Activated CD4-positive, alpha-beta memory T cell treated with anti-CD3 and anti-CD28 coated beads for 36 hours (primary cell): ENCODE measurements at regions of chr21 and their contacts with region 1.

Region 1: DNA sequence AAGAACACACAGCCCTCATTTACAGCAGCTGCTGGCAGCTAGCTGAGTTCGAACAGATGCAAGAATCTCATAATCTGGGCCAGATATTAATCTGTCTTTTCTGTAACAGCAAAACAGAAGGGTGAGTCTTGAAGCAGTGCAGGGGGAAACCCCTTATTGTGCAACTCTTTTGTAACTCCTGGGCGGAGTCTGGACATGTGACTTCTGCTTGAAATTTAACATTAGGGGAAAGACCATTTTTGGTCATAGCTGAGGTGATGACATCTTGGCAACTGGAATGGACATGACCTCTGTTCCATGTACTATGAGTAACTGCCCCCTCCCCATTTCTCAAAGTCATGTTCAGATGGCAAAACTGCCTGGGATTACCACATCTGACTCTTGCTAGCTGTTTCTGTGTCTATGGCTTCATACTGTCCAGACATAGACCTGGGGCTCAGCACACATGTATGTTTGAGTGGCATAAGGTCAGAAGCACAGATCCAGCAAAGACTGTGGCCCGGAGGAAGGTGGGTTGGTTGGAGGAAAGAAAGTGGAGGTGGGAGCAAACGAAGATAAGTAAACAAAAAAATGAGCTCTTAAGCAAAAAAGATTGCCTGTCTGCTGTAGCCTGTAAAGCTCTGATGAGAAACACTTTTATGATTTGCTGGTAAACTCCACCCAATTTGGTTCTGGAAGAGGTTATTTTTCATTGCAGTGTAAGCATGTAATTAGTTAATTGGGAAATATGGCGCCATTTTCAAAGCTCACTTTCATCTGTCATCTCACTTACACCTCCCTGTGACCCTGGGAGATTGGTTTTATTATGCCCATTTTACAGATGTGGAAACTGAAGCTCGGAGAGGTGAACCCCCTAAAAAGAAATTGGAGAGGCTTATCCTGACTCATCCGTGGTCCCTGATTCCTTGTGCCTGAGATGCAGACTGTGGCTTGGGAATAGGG is 26.1 kb downstream of the ETS2 start:
- DNase-seq: peak; percentile 76
- H3K4me3 Mint-ChIP-seq: no peak overlapping the region
- H3K27ac Mint-ChIP-seq: peak overlapping the region; percentile 69
- H3K4me1 Mint-ChIP-seq: peaks cover 16% of the 10 kb centered on the region
- H3K27me3 Mint-ChIP-seq: peaks cover 6% of the 10 kb centered on the region

Region 2: DNA sequence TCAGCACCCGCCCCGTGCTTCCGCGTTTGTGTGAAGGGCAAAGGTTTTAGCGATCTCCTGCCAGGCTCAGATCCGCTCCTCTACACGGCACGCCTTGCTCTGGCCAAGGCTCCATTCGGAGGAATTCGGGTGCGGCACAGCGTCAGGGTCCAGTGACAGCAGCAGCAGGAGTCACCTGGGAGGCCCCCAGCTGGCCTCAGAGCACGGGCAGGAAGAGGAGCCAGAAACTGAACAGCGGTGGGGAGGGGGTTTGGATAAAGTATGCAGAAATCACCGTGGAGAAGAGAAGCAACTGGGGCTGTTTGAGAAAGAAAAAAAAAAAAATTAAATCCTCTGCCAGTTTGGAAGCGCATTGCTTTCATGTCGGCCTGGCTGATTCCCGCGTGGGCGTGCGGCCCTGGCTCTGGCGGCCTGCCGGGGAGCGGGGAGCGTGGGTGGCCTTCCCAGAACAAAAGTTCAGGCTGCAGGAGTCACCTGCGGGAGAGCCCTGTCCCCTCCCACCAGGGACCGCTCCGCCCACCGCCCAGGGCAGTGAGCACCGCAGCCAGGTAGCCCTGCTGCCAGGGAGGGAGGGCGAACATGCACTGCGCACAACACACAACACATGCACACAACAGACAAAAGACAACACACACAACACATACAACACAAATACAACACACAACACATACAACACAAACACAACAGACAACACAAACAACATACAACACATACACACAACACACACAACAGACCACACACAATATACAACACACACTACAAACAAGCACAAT is 81.5 kb after region 1 on chr21:
- CTCF ChIA-PET with region 1: no interaction called
- POLR2A ChIA-PET with region 1: no interaction called
- intact Hi-C with region 1: loop called (anchors 2 kb)
- DNase-seq: peak; percentile 40
- H3K4me3 Mint-ChIP-seq: no peak overlapping the region
- H3K27ac Mint-ChIP-seq: no peak overlapping the region
- H3K4me1 Mint-ChIP-seq: peaks cover 2% of the 10 kb centered on the region
- H3K27me3 Mint-ChIP-seq: peaks cover 11% of the 10 kb centered on the region

Region 3: GRCh38 chr21:38930853-38931252 is 99.1 kb after region 1 on chr21:
- CTCF ChIA-PET with region 1: no interaction called
- POLR2A ChIA-PET with region 1: no interaction called
- intact Hi-C with region 1: no loop called
- DNase-seq: no peak
- H3K4me3 Mint-ChIP-seq: no peak overlapping the region
- H3K27ac Mint-ChIP-seq: no peak overlapping the region
- H3K4me1 Mint-ChIP-seq: no peaks in the 10 kb centered on the region
- H3K27me3 Mint-ChIP-seq: peaks cover 3% of the 10 kb centered on the region

Region 4: GRCh38 chr21:38985568-38986378 is 154.0 kb after region 1 on chr21:
- CTCF ChIA-PET with region 1: no interaction called
- POLR2A ChIA-PET with region 1: no interaction called
- intact Hi-C with region 1: loop called (anchors 10 kb)
- DNase-seq: peak; percentile 76
- H3K4me3 Mint-ChIP-seq: no peak overlapping the region
- H3K27ac Mint-ChIP-seq: peak overlapping the region; percentile 32
- H3K4me1 Mint-ChIP-seq: peaks cover 18% of the 10 kb centered on the region
- H3K27me3 Mint-ChIP-seq: peaks cover 57% of the 10 kb centered on the region